Transverse colon (tissue), 4 donors: ENCODE measurements at regions of chr13 and their contacts with region 1.

Region 1: DNA sequence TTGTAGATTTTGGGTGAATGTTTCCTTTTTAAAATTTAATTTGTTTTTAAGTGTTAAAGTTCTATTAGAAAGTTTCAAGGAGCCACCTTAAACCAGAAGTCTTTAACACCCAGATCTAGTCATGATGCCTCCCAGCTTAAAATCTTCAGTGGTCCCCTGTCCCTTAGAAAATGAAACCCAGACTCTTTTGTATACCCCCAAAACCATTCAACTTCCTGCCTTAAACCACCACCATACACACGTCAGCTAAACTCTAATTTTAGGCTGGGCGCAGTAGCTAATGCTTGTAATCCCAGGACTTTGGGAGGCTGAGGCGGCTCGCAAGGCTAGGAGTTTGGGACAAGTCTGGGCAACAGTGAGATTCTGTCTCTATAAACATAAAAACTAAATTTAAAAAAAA is 37.9 kb downstream of the N4BP2L1 start:
- DNase-seq: no peak
- H3K4me3 ChIP-seq: no peak overlapping the region
- H3K27ac ChIP-seq: no peak overlapping the region
- H3K4me1 ChIP-seq: no peaks in the 10 kb centered on the region
- H3K27me3 ChIP-seq: no peaks in the 10 kb centered on the region
- CTCF ChIP-seq: no peak
- EP300 ChIP-seq: no peak
- POLR2A ChIP-seq: no peak

Region 2: DNA sequence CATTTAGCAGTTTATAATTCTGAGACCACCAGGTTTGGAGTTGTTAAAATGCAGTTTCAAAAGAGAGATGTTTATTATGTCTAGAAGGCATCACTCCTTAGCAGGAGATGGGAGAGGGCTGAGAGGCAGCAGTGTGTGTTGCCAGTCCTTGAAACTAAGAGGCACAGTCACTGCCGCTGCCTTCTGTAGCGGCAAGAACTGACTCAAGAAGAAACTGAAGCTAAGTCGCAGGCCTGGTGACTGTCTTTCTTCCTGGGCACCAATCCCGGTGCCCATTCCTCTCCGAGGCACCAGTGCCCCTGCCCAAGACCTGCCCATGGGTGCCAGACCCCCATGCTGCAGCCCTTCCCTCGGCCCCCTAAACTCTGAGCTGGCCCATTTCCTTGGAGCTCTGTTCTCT is 17.8 kb after region 1 on chr13:
- in situ Hi-C with region 1: no loop called
- intact Hi-C with region 1: no loop called
- DNase-seq: no peak
- H3K4me3 ChIP-seq: no peak overlapping the region
- H3K27ac ChIP-seq: no peak overlapping the region
- H3K4me1 ChIP-seq: no peaks in the 10 kb centered on the region
- H3K27me3 ChIP-seq: no peaks in the 10 kb centered on the region
- CTCF ChIP-seq: no peak
- EP300 ChIP-seq: no peak
- POLR2A ChIP-seq: no peak

Region 3: GRCh38 chr13:32417995-32418394 is 27.9 kb after region 1 on chr13:
- in situ Hi-C with region 1: no loop called
- intact Hi-C with region 1: loop called (anchors 2 kb)
- DNase-seq: no peak
- H3K4me3 ChIP-seq: no peak overlapping the region
- H3K27ac ChIP-seq: no peak overlapping the region
- H3K4me1 ChIP-seq: peaks cover 0 to 16% (median 6%) of the 10 kb centered on the region in 4 donors
- H3K27me3 ChIP-seq: no peaks in the 10 kb centered on the region
- CTCF ChIP-seq: no peak
- EP300 ChIP-seq: no peak
- POLR2A ChIP-seq: no peak